ENCODE measurements at regions of chr7 and their contacts with region 1.

Region 1: GRCh38 chr7:138008547-138009349 is 6.9 kb upstream of the CREB3L2 start:
- DNase-seq: no peak
- H3K4me3 ChIP-seq: no peak overlapping the region
- H3K27ac ChIP-seq: no peak overlapping the region
- H3K4me1 ChIP-seq: peaks cover 4% of the 10 kb centered on the region
- H3K27me3 ChIP-seq: no peaks in the 10 kb centered on the region
- CTCF ChIP-seq: peak; percentile 80 to 89 (median 89)
- POLR2A ChIP-seq: no peak

Region 2: GRCh38 chr7:137898839-137899721 is 109.7 kb before region 1 on chr7:
- intact Hi-C with region 1: loop called (anchors 5 kb)
- DNase-seq: peak; percentile 89
- H3K4me3 ChIP-seq: no peak overlapping the region
- H3K27ac ChIP-seq: peak overlapping the region in 1 of 2 donors; percentile 50
- H3K4me1 ChIP-seq: peaks cover 6% of the 10 kb centered on the region
- H3K27me3 ChIP-seq: no peaks in the 10 kb centered on the region
- CTCF ChIP-seq: peak; percentile 64 to 83 (median 79)
- POLR2A ChIP-seq: no peak

Measured in testis (tissue), 5 donors.